Mammary epithelial cell (primary cell): ENCODE measurements at regions of chr2 and their contacts with region 1.

Region 1: DNA sequence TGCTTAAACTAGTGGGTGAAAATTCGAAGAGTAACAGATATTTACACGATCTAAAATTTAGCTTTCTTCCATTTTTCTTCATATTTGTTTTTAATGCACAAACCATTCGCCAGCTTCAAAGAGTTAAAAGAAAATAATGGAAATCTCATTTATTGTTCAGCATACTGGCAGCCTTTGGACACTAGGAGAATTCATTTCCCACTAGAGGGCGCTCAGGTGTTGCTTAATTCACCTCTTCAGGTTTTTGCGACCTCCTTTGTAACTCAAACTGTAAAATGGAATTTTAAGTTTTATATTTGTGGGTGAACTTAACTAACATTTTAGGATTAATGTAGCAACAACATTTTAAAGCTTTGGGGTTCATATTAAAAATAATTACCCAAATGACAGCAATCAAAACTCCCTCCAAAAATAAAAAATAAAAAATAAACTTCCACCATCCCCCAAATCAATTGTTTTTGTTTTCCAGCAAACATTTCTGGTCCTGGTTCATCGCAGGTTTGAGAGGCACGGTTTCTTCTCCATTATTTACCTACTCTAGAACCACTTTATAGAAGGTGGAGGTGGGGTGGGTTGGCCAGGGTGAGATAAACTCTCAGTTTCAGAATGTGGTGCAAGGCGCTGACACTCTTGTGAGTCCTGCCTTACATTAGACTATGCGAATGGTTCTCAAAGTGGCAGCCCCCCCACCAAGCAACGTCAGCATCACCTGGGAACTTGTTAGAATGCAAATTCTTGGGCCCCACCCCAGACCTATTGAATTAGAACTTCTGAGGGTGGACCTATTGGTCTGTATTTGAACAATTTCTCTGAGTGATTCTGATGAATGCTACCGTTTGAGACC is 24.7 kb upstream of the PNPT1 start:
- DNase-seq: peak; percentile 52
- H3K4me3 ChIP-seq: no peak overlapping the region
- H3K27ac ChIP-seq: no peak overlapping the region
- H3K4me1 ChIP-seq: peaks cover 16% of the 10 kb centered on the region
- H3K27me3 ChIP-seq: no peaks in the 10 kb centered on the region
- CTCF ChIP-seq: peak; percentile 72 to 80

Region 2: DNA sequence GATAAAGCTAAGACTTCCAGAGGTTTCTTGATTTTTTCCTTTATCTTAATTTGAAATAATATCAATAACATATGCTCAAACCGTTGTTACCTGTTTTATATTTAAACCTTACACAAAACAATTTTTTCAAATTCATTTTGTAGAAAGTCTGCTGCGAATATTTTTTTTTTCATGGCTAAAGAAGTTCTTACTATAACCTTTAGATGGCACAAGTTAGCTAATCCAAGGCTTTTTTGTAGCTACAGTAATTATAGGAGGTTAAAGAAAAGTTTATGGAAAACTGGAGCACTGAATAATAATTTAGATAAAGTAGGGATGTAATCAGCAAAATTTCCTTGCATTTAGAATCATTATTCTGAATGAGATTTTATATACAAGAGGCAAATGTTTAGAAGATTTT is 53.2 kb after region 1 on chr2:
- CTCF ChIA-PET with region 1: no interaction called
- dilution Hi-C with region 1: no loop called
- in situ Hi-C with region 1: no loop called
- intact Hi-C with region 1: loop called (anchors 1 kb)
- DNase-seq: peak; percentile 35
- H3K4me3 ChIP-seq: no peak overlapping the region
- H3K27ac ChIP-seq: no peak overlapping the region
- H3K4me1 ChIP-seq: peaks cover 18% of the 10 kb centered on the region
- H3K27me3 ChIP-seq: no peaks in the 10 kb centered on the region
- CTCF ChIP-seq: peak; percentile 50 to 71

Region 3: GRCh38 chr2:55856936-55857335 is 138.5 kb after region 1 on chr2:
- CTCF ChIA-PET with region 1: no interaction called
- dilution Hi-C with region 1: no loop called
- in situ Hi-C with region 1: no loop called
- intact Hi-C with region 1: loop called (anchors 5 kb)
- DNase-seq: peak; percentile 97
- H3K4me3 ChIP-seq: no peak overlapping the region
- H3K27ac ChIP-seq: peak overlapping the region; percentile 66
- H3K4me1 ChIP-seq: peaks cover 38% of the 10 kb centered on the region
- H3K27me3 ChIP-seq: no peaks in the 10 kb centered on the region
- CTCF ChIP-seq: no peak

Region 4: DNA sequence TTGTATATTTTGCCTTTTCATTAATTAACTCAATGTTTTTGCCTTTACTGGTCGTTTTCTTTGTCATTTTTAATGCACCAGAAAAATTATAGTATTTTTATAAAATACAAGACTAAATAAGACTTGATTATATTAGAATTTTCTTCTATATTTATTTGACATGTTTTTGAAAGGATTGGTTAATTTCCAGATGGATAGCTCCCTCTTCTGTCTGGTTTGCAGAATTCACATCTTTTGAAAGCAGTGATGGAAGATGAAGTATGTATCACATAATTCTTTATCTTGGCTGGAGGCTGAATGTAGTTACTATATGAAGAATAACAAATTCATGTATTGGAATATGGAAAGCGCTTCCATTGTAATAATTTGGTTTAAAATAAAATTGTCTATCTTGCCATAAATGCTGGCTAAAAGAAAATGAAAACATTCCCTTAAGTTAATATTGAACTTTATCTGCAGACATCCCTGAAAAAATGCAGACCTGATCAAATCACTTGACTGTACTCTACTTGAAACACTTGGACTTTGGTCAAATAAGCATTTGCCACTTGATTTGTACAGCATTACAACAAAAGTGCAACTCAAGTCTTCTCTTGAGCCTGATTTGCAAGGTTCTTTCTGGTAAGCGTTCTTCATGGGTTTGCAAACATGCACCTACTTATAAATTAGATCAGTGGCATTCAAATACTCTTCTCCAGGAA is 291.5 kb after region 1 on chr2:
- CTCF ChIA-PET with region 1: no interaction called
- dilution Hi-C with region 1: no loop called
- in situ Hi-C with region 1: loop called in 1 of 2 experiments (anchors 10 kb)
- intact Hi-C with region 1: loop called (anchors 1 kb)
- DNase-seq: peak; percentile 35
- H3K4me3 ChIP-seq: no peak overlapping the region
- H3K27ac ChIP-seq: no peak overlapping the region
- H3K4me1 ChIP-seq: no peaks in the 10 kb centered on the region
- H3K27me3 ChIP-seq: no peaks in the 10 kb centered on the region
- CTCF ChIP-seq: peak; percentile 47 to 68